ENCODE measurements at regions of chr19 and their contacts with region 1.

Region 1: GRCh38 chr19:40221858-40222837 is 4.0 kb upstream of the TTC9B start:
- DNase-seq: peak; percentile 69 to 96 (median 83)

Region 2: DNA sequence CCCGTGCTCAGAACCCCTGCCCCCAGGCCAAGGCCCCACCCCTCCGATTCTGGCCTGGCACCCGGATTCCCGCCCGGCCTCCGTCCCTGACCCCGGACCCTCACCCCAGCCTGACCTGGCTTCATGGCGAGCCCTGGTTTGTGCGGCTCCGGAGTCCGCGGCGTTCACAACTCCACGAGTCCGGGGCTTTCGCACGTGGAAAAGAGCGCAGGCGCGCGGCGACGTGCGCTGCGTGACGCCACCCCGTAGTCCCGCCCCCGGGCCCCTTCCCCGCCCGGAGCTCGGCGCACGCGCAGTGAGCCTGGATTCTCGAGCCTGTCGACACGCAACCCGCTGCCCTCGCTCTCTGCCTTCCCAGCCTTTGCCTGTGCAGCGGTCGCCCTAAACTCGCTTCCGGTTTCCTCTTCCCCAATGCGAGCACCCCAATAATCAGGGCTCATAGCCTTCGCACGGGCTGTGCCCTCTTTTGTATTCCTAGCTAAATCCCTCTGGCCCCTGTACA is 375.9 kb before region 1 on chr19 and contains the start of gene FBL:
- intact Hi-C with region 1: loop called (anchors 5 kb)
- DNase-seq: peak; percentile 92 to 99 (median 95)

Region 3: DNA sequence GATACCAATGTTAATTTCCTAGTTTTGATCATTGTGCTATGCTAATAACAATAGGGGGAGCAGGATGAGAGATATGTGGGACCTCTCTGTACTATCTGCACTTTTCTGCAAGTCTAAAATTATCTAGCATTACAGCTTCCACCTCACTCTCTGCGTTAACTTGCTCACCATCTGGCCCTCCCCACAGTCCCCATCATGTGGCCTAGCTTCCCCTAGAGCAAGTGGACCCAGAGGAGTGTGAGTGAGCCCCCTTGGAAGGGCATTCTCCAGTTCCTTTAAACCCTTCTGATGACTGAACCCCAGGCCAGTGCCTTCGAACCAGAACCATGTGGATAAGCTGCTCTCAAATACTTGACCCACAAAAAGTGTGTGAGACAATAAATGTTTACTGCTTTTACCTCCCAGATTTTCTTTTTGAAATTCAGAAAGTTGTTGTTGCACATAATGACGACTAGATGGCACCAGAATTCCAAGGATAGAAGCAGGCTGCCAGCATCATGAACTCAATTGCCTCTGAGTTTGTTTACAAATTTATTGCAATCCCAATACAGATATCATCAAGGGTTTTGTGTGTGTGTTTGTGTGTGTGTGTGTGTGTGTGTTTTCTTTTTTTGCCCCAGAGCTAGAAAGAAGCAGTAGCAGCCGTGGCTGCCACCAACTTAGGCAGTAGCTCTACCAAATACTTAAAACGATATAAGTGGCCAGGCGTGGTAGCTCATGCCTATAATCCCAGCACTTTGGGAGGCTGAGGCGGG is 82.4 kb before region 1 on chr19:
- intact Hi-C with region 1: loop called (anchors 1 kb)
- DNase-seq: no peak

Region 4: GRCh38 chr19:40190891-40191835 is 31.0 kb before region 1 on chr19 and contains the start of gene MAP3K10:
- intact Hi-C with region 1: loop called (anchors 2 kb)
- DNase-seq: peak; percentile 72 to 96 (median 81)